Cardiac septum (tissue), 1 donor: ENCODE measurements at regions of chr21 and their contacts with region 1.

Region 1: GRCh38 chr21:32403201-32403777 is 9.2 kb upstream of the EVA1C start:
- DNase-seq: no peak

Region 2: GRCh38 chr21:32569261-32570230 is 166.3 kb after region 1 on chr21:
- intact Hi-C with region 1: loop called (anchors 2 kb)
- DNase-seq: peak; percentile 82

Region 3: GRCh38 chr21:32597205-32597604 is 193.9 kb after region 1 on chr21:
- intact Hi-C with region 1: loop called (anchors 2 kb)
- DNase-seq: no peak